ENCODE measurements at regions of chr1 and their contacts with region 1.

Region 1: DNA sequence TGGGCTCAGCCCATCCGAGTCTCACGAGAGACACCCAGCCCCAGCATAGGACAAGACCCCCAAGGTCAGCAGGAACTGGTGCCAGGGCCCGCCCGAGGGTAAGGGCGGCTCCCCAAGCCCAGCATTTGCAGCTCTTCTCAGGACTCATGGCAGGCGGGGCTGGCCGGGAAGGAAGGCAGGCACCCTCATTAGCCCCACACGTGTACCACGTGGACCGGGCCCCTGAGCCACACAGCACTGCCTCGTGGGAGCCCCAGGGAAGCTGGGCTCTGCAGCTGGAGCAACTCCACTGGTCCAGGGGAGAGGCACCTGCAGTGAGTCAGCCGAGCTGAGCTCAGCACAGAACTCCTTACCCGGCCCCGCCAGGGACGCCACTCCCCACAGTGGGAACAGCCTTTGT is 97.7 kb upstream of the IFFO2 start:
- DNase-seq: no peak
- H3K4me3 ChIP-seq: no peak overlapping the region
- H3K27ac ChIP-seq: no peak overlapping the region
- H3K4me1 ChIP-seq: peaks cover 0 to 3% (median 0%) of the 10 kb centered on the region in 4 experiments; a peak in 2 of 7 replicates
- H3K27me3 ChIP-seq: no peaks in the 10 kb centered on the region
- CTCF ChIP-seq: no peak
- EP300 ChIP-seq: no peak
- POLR2A ChIP-seq: no peak
- RAD21 ChIP-seq: no peak

Region 2: GRCh38 chr1:19003371-19004290 is 50.6 kb before region 1 on chr1:
- CTCF ChIA-PET with region 1: no interaction called
- POLR2A ChIA-PET with region 1: no interaction called
- DNase-seq: peak in 1 of 2 experiments; percentile 11
- H3K4me3 ChIP-seq: no peak overlapping the region
- H3K27ac ChIP-seq: no peak overlapping the region
- H3K4me1 ChIP-seq: peaks cover 0 to 7% (median 1%) of the 10 kb centered on the region in 4 experiments; a peak in 2 of 7 replicates
- H3K27me3 ChIP-seq: no peaks in the 10 kb centered on the region; a peak in 2 of 7 replicates
- CTCF ChIP-seq: no peak
- EP300 ChIP-seq: no peak
- POLR2A ChIP-seq: no peak
- RAD21 ChIP-seq: no peak

Region 3: GRCh38 chr1:19067182-19067911 is 13.1 kb after region 1 on chr1:
- CTCF ChIA-PET with region 1: interaction called, 10 read pairs
- POLR2A ChIA-PET with region 1: interaction called, 4 read pairs
- DNase-seq: no peak
- H3K4me3 ChIP-seq: no peak overlapping the region
- H3K27ac ChIP-seq: no peak overlapping the region
- H3K4me1 ChIP-seq: peaks cover 0 to 12% (median 5%) of the 10 kb centered on the region in 4 experiments; a peak in 5 of 7 replicates
- H3K27me3 ChIP-seq: no peaks in the 10 kb centered on the region
- CTCF ChIP-seq: peak in 1 of 3 experiments; percentile 35; a peak in 2 of 4 replicates
- EP300 ChIP-seq: no peak
- POLR2A ChIP-seq: no peak
- RAD21 ChIP-seq: peak in 1 of 2 experiments; percentile 23; a peak in 2 of 4 replicates

Measured in H1 (cell line).